Endothelial cell of umbilical vein (primary cell): ENCODE measurements at regions of chr16 and their contacts with region 1.

Region 1: GRCh38 chr16:81444448-81445121 is at the start of gene CMIP:
- DNase-seq: peak; percentile 60
- H3K4me3 ChIP-seq: peak within 1 kb of the TSS; percentile 96 to 97 (median 97)
- H3K27ac ChIP-seq: peak within 1 kb of the TSS; percentile 81
- H3K4me1 ChIP-seq: peaks cover 20% of the 10 kb centered on the region
- H3K27me3 ChIP-seq: peaks cover 13 to 30% of the 10 kb centered on the region in 2 experiments
- CTCF ChIP-seq: no peak
- POLR2A ChIP-seq: no peak
- total RNA-seq, gene CMIP: 82.4 and 101 TPM in 2 replicates

Region 2: GRCh38 chr16:81390840-81391239 is 53.7 kb before region 1 on chr16:
- CTCF ChIA-PET with region 1: no interaction called
- POLR2A ChIA-PET with region 1: no interaction called
- dilution Hi-C with region 1: no loop called
- intact Hi-C with region 1: no loop called
- DNase-seq: no peak
- H3K4me3 ChIP-seq: no peak overlapping the region
- H3K27ac ChIP-seq: no peak overlapping the region
- H3K4me1 ChIP-seq: peaks cover 12% of the 10 kb centered on the region
- H3K27me3 ChIP-seq: no peaks in the 10 kb centered on the region
- CTCF ChIP-seq: no peak
- POLR2A ChIP-seq: no peak

Region 3: DNA sequence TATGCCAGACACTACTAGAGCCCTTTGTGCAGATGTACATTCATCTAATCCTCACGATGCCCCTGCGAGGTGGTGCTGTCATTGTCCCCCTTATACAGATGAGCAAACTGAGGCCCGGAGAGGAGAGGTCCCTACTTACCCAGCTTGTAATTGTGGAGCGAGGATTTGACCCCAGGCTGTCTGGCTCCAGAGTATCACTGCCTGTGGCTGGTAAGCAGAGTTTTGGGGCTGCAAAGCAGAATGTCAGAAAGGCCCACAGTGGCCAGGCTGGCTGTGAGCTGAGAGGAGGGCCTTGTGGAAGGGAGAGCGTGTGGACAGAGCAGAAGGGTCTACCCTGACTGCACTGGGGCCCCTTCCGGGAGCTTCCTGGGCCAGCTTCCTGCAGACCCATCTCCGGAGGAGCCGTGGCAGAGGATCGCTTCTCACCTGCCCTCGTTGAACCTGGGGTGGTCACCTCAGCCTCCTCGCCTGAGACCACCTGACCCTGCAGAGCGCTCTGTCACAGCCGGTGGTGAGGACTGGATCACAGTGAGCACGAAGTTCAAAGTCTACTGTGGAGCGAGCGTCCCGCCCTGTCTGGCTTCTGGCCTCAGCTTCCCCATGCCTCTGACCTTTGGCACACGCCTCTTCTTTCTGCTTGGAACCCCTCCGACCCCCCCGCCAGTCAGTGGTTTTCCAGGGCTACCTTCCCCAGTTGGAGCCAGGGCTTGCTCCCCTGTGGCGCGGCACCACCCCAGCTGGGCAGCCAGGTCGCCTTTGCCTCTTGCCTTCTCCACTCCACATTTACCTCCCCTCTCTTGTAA is 12.1 kb after region 1 on chr16:
- CTCF ChIA-PET with region 1: interaction called, 3 read pairs
- POLR2A ChIA-PET with region 1: interaction called, 3 read pairs
- dilution Hi-C with region 1: no loop called
- intact Hi-C with region 1: loop called (anchors 1 kb)
- DNase-seq: no peak
- H3K4me3 ChIP-seq: no peak overlapping the region
- H3K27ac ChIP-seq: no peak overlapping the region
- H3K4me1 ChIP-seq: peaks cover 17% of the 10 kb centered on the region
- H3K27me3 ChIP-seq: no peaks in the 10 kb centered on the region
- CTCF ChIP-seq: no peak
- POLR2A ChIP-seq: no peak

Region 4: DNA sequence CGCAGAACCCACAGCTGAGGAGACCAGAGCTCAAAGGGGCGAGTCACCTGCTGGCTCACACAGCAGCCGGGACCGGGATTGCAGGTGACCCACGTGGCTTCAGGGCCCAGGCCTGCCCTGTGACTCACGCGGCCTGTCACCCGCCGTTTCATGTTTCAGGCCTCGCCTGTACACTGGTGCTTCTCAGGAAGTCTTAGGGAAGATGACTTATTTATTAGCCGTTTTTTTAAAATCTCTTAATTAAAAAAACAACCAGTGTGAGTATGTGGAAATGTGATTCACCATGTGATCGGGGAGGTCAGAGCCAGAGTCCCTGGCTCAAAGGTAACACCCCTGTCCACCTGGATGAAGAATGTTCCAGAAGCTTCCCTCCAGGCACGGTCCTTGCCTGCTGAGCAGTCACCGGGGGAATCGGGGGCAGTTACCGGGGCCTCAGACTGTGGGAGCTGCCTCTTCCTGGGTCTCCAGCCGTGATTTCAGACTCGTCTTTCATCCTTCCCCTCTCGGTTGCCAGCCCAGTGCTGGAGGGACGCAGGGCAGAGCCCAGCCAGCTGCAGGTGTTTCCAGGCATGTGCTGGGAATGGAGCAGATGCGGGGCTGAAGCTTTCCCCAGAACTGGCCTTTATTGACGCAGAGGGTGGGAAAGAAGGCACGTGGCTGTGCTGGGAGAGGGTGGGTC is 49.3 kb after region 1 on chr16:
- CTCF ChIA-PET with region 1: interaction called, 5 read pairs
- POLR2A ChIA-PET with region 1: no interaction called
- dilution Hi-C with region 1: no loop called
- intact Hi-C with region 1: loop called (anchors 1 kb)
- DNase-seq: peak; percentile 94
- H3K4me3 ChIP-seq: no peak overlapping the region
- H3K27ac ChIP-seq: peak overlapping the region; percentile 96
- H3K4me1 ChIP-seq: peaks cover 80% of the 10 kb centered on the region
- H3K27me3 ChIP-seq: no peaks in the 10 kb centered on the region
- CTCF ChIP-seq: no peak
- POLR2A ChIP-seq: no peak

Region 5: GRCh38 chr16:81505011-81505661 is 60.6 kb after region 1 on chr16:
- CTCF ChIA-PET with region 1: no interaction called
- POLR2A ChIA-PET with region 1: no interaction called
- dilution Hi-C with region 1: no loop called
- intact Hi-C with region 1: no loop called
- DNase-seq: no peak
- H3K4me3 ChIP-seq: no peak overlapping the region
- H3K27ac ChIP-seq: no peak overlapping the region
- H3K4me1 ChIP-seq: peaks cover 32% of the 10 kb centered on the region
- H3K27me3 ChIP-seq: no peaks in the 10 kb centered on the region
- CTCF ChIP-seq: no peak
- POLR2A ChIP-seq: no peak

Region 6: DNA sequence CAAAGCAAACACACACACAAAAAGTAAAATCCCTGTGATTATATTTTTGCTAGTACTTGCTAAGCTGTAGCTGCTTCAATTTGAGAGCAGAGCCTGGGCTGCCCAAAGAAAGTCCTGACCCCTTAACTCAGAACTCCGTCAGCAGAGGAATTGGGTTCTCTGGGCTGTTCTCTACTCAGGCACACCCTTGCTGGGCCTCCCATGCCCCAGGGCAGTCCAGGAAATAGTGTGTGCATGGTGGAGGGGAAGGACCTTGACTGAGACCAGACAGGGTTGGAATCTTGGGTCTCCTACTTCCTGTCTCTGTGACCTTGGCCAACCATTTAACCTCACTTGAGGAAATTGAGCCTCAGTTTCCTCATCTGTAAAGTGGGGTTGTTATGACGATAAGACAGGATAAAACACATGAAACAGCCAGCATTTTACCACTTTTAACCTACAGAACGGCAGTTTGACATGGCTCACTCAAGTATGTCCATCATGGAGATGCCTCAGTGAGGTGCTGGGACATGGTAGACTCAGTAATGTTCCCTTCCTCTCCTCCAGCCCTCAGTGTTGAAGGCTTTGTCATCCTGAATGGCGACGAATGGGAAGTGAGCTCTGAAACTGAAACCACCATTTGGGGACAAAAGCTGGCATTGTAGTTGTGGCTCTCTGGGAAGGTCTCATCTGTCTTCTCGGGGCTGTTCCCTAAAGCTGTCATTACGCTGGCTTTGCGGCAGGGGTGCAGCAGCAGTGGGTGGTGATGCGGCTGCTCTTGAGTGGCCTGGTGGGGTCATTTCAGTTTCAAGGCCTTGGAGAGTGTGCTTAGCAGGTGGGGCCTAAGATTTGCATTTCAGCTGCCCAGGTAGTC is 74.9 kb after region 1 on chr16:
- CTCF ChIA-PET with region 1: interaction called, 3 read pairs
- POLR2A ChIA-PET with region 1: no interaction called
- dilution Hi-C with region 1: no loop called
- intact Hi-C with region 1: loop called (anchors 2 kb)
- DNase-seq: no peak
- H3K4me3 ChIP-seq: no peak overlapping the region
- H3K27ac ChIP-seq: peak overlapping the region; percentile 97
- H3K4me1 ChIP-seq: peaks cover 39% of the 10 kb centered on the region
- H3K27me3 ChIP-seq: no peaks in the 10 kb centered on the region
- CTCF ChIP-seq: no peak
- POLR2A ChIP-seq: no peak

Region 7: DNA sequence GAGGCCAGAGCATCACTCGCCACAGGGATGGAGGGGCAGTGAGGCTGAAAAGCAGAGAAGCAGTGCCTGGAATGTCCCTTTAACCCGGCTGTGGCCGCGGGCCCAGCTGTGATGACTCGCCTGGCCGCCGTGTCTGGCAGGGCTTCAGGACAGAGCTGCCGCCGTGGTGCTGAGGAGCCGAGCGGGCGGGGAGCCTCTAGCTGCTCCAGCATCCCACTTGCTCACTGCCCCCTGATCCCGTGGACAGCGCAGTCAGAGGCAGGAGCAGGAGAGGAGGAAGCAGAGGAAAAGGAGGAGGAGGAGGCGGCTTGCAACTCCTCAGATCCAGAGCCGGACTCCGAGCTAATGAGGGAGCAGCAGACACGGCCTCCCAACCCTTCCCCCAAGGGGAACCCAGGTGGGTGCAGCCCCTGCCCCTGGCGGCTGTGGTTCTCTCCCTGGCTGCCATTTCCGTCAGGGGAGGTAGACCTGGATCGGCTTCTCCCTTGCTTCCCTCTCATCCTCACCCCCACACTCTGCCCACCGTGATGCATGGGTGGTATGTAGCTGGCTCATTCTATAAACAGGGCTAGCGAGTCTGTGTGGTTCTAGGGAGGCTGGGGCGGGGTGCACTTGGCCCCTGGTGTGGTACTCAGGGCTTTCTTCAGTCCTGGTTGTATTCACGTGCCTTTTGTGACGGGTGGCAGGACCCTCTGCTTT is 165.7 kb after region 1 on chr16:
- CTCF ChIA-PET with region 1: no interaction called
- POLR2A ChIA-PET with region 1: no interaction called
- dilution Hi-C with region 1: no loop called
- intact Hi-C with region 1: loop called (anchors 1 kb)
- DNase-seq: peak; percentile 77
- H3K4me3 ChIP-seq: peak overlapping the region in 1 of 3 experiments; percentile 18
- H3K27ac ChIP-seq: peak overlapping the region; percentile 49
- H3K4me1 ChIP-seq: peaks cover 46% of the 10 kb centered on the region
- H3K27me3 ChIP-seq: no peaks in the 10 kb centered on the region
- CTCF ChIP-seq: no peak
- POLR2A ChIP-seq: no peak

Region 8: GRCh38 chr16:81723098-81723723 is 278.6 kb after region 1 on chr16:
- CTCF ChIA-PET with region 1: no interaction called
- POLR2A ChIA-PET with region 1: no interaction called
- dilution Hi-C with region 1: no loop called
- intact Hi-C with region 1: loop called (anchors 2 kb)
- DNase-seq: peak; percentile 85
- H3K4me3 ChIP-seq: no peak overlapping the region
- H3K27ac ChIP-seq: no peak overlapping the region
- H3K4me1 ChIP-seq: peaks cover 7% of the 10 kb centered on the region
- H3K27me3 ChIP-seq: peaks cover 0 to 3% of the 10 kb centered on the region in 2 experiments
- CTCF ChIP-seq: peak; percentile 47 to 53
- POLR2A ChIP-seq: no peak